Activated naive CD4-positive, alpha-beta T cell treated with anti-CD3 and anti-CD28 coated beads, Interleukin-2, amount 10 ng/mL, durations not matched to agents 7 days and 5 days (primary cell): ENCODE measurements at regions of chr14 and their contacts with region 1.

Region 1: GRCh38 chr14:22531451-22532344 is 57.3 kb downstream of the DAD1 start:
- DNase-seq: no peak
- H3K4me3 Mint-ChIP-seq: peak overlapping the region; percentile 71
- H3K27ac Mint-ChIP-seq: peak overlapping the region; percentile 89
- H3K4me1 Mint-ChIP-seq: peaks cover 92% of the 10 kb centered on the region
- H3K27me3 Mint-ChIP-seq: no peaks in the 10 kb centered on the region

Region 2: GRCh38 chr14:22519877-22520685 is 11.6 kb before region 1 on chr14:
- CTCF ChIA-PET with region 1: interaction called, 11 read pairs
- DNase-seq: no peak
- H3K4me3 Mint-ChIP-seq: peak overlapping the region; percentile 80
- H3K27ac Mint-ChIP-seq: peak overlapping the region; percentile 93
- H3K4me1 Mint-ChIP-seq: peaks cover 96% of the 10 kb centered on the region
- H3K27me3 Mint-ChIP-seq: no peaks in the 10 kb centered on the region

Region 3: GRCh38 chr14:22549981-22550673 is 18.4 kb after region 1 on chr14:
- CTCF ChIA-PET with region 1: interaction called, 18 read pairs
- DNase-seq: peak; percentile 69
- H3K4me3 Mint-ChIP-seq: peak overlapping the region; percentile 67
- H3K27ac Mint-ChIP-seq: peak overlapping the region; percentile 95
- H3K4me1 Mint-ChIP-seq: peaks cover 95% of the 10 kb centered on the region
- H3K27me3 Mint-ChIP-seq: peaks cover 4% of the 10 kb centered on the region

Region 4: DNA sequence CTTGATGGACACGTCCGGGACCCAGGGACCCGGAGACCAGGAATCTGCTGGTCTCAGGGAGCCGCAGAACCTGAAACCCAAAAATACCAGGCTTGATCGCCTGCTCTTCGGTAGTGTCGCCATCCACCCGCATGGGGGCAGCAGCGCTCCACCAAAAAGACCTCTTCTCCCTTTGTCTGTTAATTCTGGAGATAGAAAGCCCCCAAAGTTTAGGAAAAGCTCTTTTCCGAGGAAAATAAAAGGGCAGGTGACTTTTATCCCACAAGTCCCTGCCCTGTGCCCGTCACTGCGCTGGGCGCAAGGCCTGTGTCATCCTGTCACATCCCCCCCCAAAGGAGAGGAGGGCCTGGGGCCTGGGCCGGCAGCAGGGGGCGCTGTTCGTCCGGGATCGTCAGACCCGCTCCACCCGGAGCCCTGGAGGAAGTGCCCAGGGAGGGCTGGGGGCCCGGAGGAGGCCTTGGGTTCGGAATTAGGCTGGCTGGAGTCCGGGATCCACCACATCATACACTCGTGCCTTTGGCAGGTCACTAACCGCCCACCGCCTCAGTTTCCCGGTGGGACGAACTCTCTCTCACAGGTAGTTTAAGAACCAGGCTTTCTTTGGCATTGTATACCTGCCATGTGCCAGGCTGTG is 25.4 kb after region 1 on chr14:
- CTCF ChIA-PET with region 1: interaction called, 17 read pairs
- DNase-seq: peak; percentile 93
- H3K4me3 Mint-ChIP-seq: peak overlapping the region; percentile 80
- H3K27ac Mint-ChIP-seq: peak overlapping the region; percentile 97
- H3K4me1 Mint-ChIP-seq: peaks cover 92% of the 10 kb centered on the region
- H3K27me3 Mint-ChIP-seq: peaks cover 8% of the 10 kb centered on the region

Region 5: GRCh38 chr14:22748631-22749068 is 217.0 kb after region 1 on chr14:
- CTCF ChIA-PET with region 1: no interaction called
- DNase-seq: no peak
- H3K4me3 Mint-ChIP-seq: no peak overlapping the region
- H3K27ac Mint-ChIP-seq: no peak overlapping the region
- H3K4me1 Mint-ChIP-seq: peaks cover 14% of the 10 kb centered on the region
- H3K27me3 Mint-ChIP-seq: peaks cover 52% of the 10 kb centered on the region